Colonic mucosa (tissue), 4 donors: ENCODE measurements at regions of chr11 and their contacts with region 1.

Region 1: DNA sequence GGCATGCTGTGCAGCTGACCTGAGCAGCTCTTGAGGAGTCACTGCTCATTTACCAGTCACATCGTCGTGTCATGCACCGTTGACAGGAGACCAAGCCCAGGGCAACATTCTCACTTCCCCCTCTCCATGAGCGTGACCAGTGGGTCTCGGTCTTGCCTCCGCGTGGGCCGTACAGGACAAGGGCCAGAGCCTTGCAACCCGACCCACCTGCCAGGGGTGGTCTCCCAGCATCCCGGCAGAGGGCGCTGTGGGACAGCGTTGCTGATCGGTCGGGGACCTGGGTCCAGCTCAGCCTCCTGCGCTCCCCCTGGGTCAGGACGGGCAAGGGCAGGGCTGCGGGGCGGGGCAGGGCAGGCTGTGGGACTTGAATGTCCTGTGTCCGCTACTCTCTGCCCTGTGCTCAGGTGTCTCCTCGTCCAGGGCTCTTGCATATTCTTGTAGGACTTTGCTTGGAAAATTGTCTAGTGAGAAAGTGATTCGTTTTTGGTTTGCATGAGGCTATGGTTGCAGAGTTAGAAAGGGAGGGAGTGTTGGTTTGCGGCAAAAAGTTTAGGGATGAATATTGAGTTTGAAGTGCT is 16.2 kb downstream of the EIF4G2 start:
- DNase-seq: peak; percentile 92
- H3K4me3 ChIP-seq: no peak overlapping the region
- H3K27ac ChIP-seq: no peak overlapping the region
- H3K4me1 ChIP-seq: no peaks in the 10 kb centered on the region
- H3K27me3 ChIP-seq: no peaks in the 10 kb centered on the region
- CTCF ChIP-seq: peak; percentile 88

Region 2: DNA sequence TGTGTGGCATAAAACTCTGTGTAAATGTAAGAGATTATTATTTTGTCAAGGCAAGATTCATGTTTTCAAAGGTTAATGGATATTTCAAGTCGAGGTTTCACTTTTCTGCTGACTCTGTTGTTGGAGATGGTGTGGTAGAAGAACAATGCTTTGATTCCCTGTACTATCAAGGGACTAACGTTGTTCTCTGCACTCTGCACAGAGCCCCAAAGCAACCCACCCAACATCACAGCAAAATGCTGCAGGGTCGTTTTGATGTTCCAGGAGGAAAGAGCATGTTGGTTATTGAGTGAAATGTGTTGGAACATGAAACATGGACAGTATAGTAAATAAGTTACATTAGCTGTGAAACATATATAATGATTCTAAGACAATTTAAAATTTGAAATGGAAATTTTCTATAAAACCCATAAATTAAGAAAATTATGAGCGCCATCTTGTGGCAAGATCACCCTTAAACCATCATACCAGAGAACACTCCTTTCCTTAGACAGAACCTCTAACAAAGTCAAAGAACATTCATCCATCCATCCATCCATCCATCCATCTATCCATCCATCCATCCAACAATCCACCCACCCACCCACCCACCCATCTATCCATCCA is 229.7 kb after region 1 on chr11:
- intact Hi-C with region 1: loop called (anchors 2 kb)
- DNase-seq: peak; percentile 26
- H3K4me3 ChIP-seq: no peak overlapping the region
- H3K27ac ChIP-seq: no peak overlapping the region
- H3K4me1 ChIP-seq: no peaks in the 10 kb centered on the region
- H3K27me3 ChIP-seq: no peaks in the 10 kb centered on the region
- CTCF ChIP-seq: peak; percentile 21

Region 3: GRCh38 chr11:11265994-11266606 is 473.6 kb after region 1 on chr11:
- intact Hi-C with region 1: loop called (anchors 10 kb)
- DNase-seq: peak; percentile 62
- H3K4me3 ChIP-seq: no peak overlapping the region
- H3K27ac ChIP-seq: no peak overlapping the region
- H3K4me1 ChIP-seq: no peaks in the 10 kb centered on the region
- H3K27me3 ChIP-seq: no peaks in the 10 kb centered on the region
- CTCF ChIP-seq: peak; percentile 79

Region 4: GRCh38 chr11:11787305-11788062 is 995.0 kb after region 1 on chr11:
- intact Hi-C with region 1: loop called (anchors 10 kb)
- DNase-seq: peak; percentile 81
- H3K4me3 ChIP-seq: no peak overlapping the region
- H3K27ac ChIP-seq: no peak overlapping the region
- H3K4me1 ChIP-seq: no peaks in the 10 kb centered on the region
- H3K27me3 ChIP-seq: no peaks in the 10 kb centered on the region
- CTCF ChIP-seq: peak; percentile 89